Endothelial cell of umbilical vein (primary cell): ENCODE measurements at regions of chr4 and their contacts with region 1.

Region 1: GRCh38 chr4:139453371-139454110 is 380 bp upstream of the RAB33B start:
- DNase-seq: peak; percentile 98
- H3K4me3 ChIP-seq: peak overlapping the region; percentile 91 to 99 (median 97)
- H3K27ac ChIP-seq: peak overlapping the region; percentile 89
- H3K4me1 ChIP-seq: peaks cover 45% of the 10 kb centered on the region
- H3K27me3 ChIP-seq: no peaks in the 10 kb centered on the region
- CTCF ChIP-seq: peak in 1 of 2 donors; percentile 4
- POLR2A ChIP-seq: peak; percentile 89

Region 2: GRCh38 chr4:139083956-139084803 is 369.4 kb before region 1 on chr4:
- CTCF ChIA-PET with region 1: no interaction called
- POLR2A ChIA-PET with region 1: no interaction called
- dilution Hi-C with region 1: no loop called
- intact Hi-C with region 1: loop called (anchors 1 kb)
- DNase-seq: peak; percentile 91
- H3K4me3 ChIP-seq: peak overlapping the region; percentile 65 to 100 (median 92)
- H3K27ac ChIP-seq: peak overlapping the region; percentile 85
- H3K4me1 ChIP-seq: peaks cover 19% of the 10 kb centered on the region
- H3K27me3 ChIP-seq: no peaks in the 10 kb centered on the region
- CTCF ChIP-seq: peak in 1 of 2 donors; percentile 32
- POLR2A ChIP-seq: peak; percentile 36

Region 3: DNA sequence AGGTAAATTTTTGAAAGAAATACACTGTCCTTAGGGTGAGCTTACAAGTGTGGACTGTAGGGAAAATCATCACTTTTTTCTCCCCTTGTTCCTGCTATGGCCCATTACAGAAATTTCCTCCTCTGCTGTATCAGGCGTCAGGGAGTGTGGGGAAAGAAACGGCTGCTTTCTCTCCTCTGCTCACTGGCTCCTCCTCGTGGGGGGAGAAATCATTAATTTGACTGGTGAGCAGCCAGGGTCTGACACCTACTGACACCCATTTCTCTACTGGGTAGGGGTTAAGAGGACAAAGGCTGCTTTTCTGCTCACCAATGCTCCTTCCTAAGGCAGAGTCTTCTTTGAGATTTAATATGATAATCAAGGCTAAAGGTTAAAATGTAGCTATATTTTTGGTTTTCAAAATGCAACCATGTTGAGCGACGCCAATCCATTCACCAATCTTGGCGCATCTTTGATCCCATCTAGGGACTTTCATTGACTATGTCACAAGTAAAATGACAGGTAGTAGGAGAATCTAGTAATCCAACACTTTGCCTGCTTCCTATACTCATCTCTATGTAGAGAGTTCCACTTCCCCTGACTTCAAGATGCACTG is 77.4 kb after region 1 on chr4:
- CTCF ChIA-PET with region 1: no interaction called
- POLR2A ChIA-PET with region 1: no interaction called
- dilution Hi-C with region 1: no loop called
- intact Hi-C with region 1: loop called (anchors 2 kb)
- DNase-seq: peak; percentile 50
- H3K4me3 ChIP-seq: no peak overlapping the region
- H3K27ac ChIP-seq: no peak overlapping the region
- H3K4me1 ChIP-seq: no peaks in the 10 kb centered on the region
- H3K27me3 ChIP-seq: no peaks in the 10 kb centered on the region
- CTCF ChIP-seq: peak; percentile 68
- POLR2A ChIP-seq: no peak

Region 4: GRCh38 chr4:139554893-139555704 is 101.6 kb after region 1 on chr4:
- CTCF ChIA-PET with region 1: no interaction called
- POLR2A ChIA-PET with region 1: no interaction called
- dilution Hi-C with region 1: no loop called
- intact Hi-C with region 1: loop called (anchors 1 kb)
- DNase-seq: peak; percentile 96
- H3K4me3 ChIP-seq: peak overlapping the region; percentile 65 to 91 (median 89)
- H3K27ac ChIP-seq: peak overlapping the region; percentile 77
- H3K4me1 ChIP-seq: peaks cover 20% of the 10 kb centered on the region
- H3K27me3 ChIP-seq: peaks cover 15 to 23% of the 10 kb centered on the region in 2 experiments
- CTCF ChIP-seq: no peak
- POLR2A ChIP-seq: peak; percentile 78